MCF 10A (cell line): ENCODE measurements at regions of chr1 and their contacts with region 1.

Region 1: DNA sequence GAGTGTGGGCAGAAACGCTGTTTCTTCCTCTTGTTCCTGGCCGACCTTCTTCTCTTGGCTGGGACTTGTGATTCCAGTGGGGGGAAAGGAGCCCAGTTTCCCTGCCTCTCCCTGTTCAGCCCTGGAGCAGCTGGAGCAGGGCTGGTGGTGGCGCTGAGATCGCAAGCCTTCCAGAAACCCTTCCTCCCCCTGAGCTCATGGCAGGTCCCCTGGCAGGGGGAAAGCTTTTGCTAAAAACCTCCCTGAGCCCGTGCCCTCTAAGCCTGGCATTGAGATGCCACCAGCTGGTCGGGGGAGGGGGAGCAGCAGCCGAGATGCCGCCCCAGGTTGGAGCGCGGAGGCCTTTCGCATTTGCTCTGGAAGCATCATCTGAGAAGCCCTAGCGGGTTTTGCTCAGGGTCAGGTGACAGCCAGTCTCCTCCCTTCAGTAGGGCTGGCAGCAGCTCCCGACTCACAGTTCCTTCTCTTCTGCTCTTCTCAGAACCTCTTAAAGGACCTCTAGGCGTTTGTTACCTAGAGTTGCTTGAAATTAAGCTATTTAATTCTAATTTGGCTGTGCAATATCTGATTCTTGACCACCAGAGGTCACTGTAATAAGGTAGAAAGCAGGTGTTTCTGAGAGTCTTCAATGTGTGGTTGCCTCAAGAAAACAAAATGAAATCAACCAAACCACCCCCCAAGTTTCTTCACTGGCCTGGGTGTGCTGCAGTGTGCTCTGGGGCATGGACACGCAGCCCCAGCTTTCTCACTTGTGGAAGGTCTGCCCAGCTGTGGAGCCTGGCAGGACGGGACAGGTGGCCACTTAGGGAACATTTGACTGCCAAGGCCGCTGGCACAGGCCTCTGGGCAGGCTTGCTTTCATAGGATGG is 257.3 kb downstream of the CAMTA1 start:
- DNase-seq: peak; percentile 49
- H3K4me3 Mint-ChIP-seq: no peak overlapping the region
- H3K27ac Mint-ChIP-seq: no peak overlapping the region
- H3K4me1 Mint-ChIP-seq: no peaks in the 10 kb centered on the region
- H3K27me3 Mint-ChIP-seq: peaks cover 38% of the 10 kb centered on the region
- CTCF ChIP-seq: peak; percentile 49

Region 2: DNA sequence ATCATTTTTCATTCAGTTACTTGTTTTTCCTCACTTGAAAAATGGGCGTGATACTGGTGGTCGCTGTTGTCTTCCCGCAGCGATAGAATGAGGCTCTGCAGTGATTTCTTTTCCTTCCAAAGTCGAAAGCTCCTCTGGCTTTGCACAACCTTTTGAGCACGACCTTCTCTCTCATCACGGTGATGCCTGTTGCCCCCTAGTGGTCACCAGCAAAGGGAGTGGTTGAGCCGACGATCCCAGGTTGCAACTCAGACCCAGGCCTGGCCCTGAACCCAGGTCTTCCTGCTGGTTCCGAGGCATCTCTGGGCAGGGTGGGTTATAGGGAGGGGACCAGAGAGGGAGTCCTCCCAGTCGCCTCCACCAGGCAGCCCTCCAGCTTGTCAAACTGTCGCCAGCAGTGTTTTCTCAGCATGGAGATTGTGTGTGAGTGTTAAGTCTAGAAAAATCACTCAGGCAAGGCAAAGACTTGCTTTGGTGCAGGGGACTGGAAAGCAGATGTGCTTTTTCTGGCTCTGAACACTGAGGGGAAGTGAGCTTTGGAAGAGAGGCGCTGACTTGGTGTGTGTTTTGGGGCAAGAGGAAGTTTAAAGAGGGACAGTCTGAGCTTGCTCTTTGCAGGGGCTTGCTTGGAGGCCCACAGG is 28.0 kb after region 1 on chr1:
- CTCF ChIA-PET with region 1: interaction called, 20 read pairs
- POLR2A ChIA-PET with region 1: no interaction called
- intact Hi-C with region 1: no loop called
- DNase-seq: peak; percentile 70
- H3K4me3 Mint-ChIP-seq: no peak overlapping the region
- H3K27ac Mint-ChIP-seq: no peak overlapping the region
- H3K4me1 Mint-ChIP-seq: no peaks in the 10 kb centered on the region
- H3K27me3 Mint-ChIP-seq: peaks cover 45% of the 10 kb centered on the region
- CTCF ChIP-seq: peak; percentile 73

Region 3: DNA sequence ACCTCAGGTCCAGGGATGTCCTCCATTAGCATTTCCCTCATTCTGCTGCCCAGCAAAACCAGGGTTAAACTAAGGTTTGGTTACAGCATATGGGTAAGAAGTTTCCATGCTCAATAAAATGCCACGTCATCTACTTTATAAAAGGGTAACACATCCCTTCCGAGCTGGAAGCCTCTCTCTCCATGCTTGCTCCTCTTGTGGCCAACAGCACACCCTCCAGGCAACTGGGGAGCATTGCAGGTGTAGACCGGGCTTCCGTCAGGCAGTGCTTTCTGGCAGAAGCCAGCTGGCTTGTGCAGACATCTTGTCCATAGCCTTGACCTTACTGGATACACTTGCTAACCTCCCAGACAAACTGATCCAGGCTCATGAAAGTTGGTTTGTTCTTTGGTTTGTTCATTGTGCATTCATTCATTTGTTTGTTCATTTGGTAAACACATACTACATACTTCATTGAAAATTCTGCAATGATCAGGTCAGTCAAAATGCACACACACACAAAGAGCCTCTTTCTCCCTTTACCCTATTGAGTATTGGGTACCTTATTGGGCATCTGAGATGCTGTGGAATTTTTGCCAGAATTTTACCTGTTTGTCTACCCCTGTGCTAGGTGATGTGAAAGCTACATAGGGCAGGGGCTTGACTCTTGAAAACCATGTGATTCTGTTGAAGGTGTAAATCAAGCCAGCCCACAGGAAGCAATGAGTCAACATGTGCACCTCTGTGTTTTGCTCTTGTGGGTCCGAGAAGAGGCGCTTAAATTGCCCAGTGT is 165.5 kb after region 1 on chr1:
- CTCF ChIA-PET with region 1: interaction called, 19 read pairs
- POLR2A ChIA-PET with region 1: no interaction called
- intact Hi-C with region 1: no loop called
- DNase-seq: peak; percentile 74
- H3K4me3 Mint-ChIP-seq: no peak overlapping the region
- H3K27ac Mint-ChIP-seq: no peak overlapping the region
- H3K4me1 Mint-ChIP-seq: peaks cover 4% of the 10 kb centered on the region
- H3K27me3 Mint-ChIP-seq: peaks cover 37% of the 10 kb centered on the region
- CTCF ChIP-seq: peak; percentile 55

Region 4: GRCh38 chr1:7539769-7540175 is 497.2 kb after region 1 on chr1:
- CTCF ChIA-PET with region 1: interaction called, 16 read pairs
- POLR2A ChIA-PET with region 1: no interaction called
- intact Hi-C with region 1: loop called (anchors 1 kb)
- DNase-seq: peak; percentile 85
- H3K4me3 Mint-ChIP-seq: no peak overlapping the region
- H3K27ac Mint-ChIP-seq: no peak overlapping the region
- H3K4me1 Mint-ChIP-seq: peaks cover 8% of the 10 kb centered on the region
- H3K27me3 Mint-ChIP-seq: no peaks in the 10 kb centered on the region
- CTCF ChIP-seq: peak; percentile 61